Thyroid gland (tissue), 4 donors: ENCODE measurements at regions of chr22 and their contacts with region 1.

Region 1: DNA sequence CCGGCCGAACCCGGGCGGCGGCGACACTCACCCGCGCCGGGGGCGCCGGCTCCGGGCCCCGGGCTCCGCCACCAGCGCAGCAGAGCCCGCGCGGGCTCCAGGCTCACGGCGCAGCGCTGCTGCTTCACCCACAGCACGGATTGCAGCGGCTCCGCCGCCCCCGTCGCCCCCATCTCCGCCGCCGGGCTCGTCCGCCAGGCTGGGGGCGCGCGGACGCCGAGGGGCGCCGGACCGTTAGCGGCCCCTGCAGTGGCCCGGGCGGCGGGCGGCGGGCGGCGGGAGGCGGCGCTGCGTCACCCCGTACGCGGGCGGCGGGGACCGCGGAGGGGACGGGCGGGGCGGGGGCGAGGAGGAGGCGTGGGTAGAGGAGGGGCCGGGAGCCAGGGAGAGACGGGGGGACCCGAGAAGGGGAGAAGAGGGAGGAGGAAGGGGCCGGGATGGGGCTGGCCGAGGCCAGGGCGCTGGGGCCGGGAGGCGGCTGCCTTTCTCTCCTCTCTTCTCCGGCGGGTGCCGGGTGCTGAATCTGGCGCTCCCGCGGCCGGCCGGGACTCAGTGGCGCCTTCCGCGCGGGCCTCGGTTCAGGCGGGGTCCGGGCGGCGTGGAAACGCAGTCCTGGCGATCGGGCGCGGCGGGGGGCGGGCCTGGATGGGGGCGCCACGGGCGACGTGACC is at the start of gene CERK:
- DNase-seq: peak; percentile 77 to 79
- H3K4me3 ChIP-seq: peak within 1 kb of the TSS; percentile 52 to 72 (median 63)
- H3K27ac ChIP-seq: peak within 1 kb of the TSS; percentile 82 to 92 (median 90)
- H3K4me1 ChIP-seq: peaks cover 51 to 52% of the 10 kb centered on the region in 2 donors
- H3K27me3 ChIP-seq: no peaks in the 10 kb centered on the region
- CTCF ChIP-seq: no peak
- POLR2A ChIP-seq: peak; percentile 23 to 70
- total RNA-seq, gene CERK: 74.6 to 84.7 (median 81.5) TPM

Region 2: GRCh38 chr22:46576556-46577367 is 161.3 kb before region 1 on chr22:
- intact Hi-C with region 1: loop called (anchors 5 kb)
- DNase-seq: peak; percentile 57 to 59
- H3K4me3 ChIP-seq: peak overlapping the region in 2 of 3 donors; percentile 5 to 71
- H3K27ac ChIP-seq: peak overlapping the region in 2 of 3 donors; percentile 23 to 44
- H3K4me1 ChIP-seq: peaks cover 43 to 58% of the 10 kb centered on the region in 2 donors
- H3K27me3 ChIP-seq: no peaks in the 10 kb centered on the region
- CTCF ChIP-seq: no peak
- POLR2A ChIP-seq: peak in 1 of 2 donors; percentile 46

Region 3: DNA sequence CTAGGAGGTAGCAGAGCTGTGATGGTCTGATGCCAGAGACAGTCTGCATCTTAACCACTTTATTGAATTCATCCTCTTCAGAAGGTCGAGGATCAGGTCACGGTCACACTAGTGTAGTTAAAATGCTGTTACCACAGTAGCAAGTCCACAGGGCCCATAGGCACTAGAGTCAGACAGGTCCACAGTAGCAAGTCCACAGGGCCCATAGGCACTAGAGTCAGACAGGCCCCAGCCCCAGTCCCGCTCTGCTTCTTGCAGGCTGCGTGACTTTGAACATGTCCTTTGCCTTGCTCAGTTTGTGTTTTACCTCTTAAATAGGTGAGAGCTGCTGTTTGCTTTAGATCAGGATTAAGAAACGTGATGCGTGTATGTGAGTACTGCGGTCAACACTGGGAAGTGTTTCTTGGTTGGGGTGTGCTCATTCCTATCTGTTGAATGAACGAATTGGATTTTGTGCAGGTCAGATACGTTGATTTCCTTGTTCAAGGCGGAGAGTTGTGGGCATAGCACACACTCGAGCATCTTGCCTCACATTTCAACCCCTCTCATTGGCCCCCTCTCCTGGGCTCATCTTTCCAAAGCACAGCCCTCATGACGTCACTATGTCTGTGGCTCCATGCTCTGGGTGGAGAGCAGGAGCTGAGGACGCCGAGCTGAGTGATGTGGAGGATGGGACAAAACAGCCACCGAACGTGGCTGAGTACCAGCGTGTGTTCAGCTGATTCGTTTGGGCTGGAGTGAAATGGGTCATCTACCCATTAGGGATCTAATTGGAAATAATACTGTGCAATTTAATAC is 216.1 kb after region 1 on chr22:
- intact Hi-C with region 1: no loop called
- DNase-seq: no peak
- H3K4me3 ChIP-seq: no peak overlapping the region
- H3K27ac ChIP-seq: no peak overlapping the region
- H3K4me1 ChIP-seq: no peaks in the 10 kb centered on the region
- H3K27me3 ChIP-seq: no peaks in the 10 kb centered on the region
- CTCF ChIP-seq: no peak
- POLR2A ChIP-seq: no peak